ENCODE measurements at regions of chr1 and their contacts with region 1.

Region 1: DNA sequence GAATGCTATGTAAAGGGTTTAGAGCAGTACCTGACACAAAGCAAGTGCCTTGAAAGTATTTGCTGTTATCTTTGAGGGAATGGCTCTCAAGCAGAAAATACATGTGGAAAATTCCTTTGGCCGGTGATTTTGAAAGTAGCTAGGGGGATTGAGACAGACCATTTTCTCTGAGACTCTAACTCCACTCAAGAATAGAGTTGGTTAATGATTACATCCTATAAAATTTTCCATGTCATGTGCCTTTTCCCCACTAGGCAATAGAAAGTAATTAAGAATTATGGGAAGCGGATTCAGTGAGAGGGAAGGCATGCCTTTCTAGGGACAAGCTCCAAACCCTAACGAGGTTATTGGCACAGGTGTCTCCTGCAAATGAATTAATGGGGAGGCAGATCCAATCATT is 276.0 kb downstream of the GPATCH2 start:
- DNase-seq: no peak
- ATAC-seq: no peak
- H3K4me3 ChIP-seq: no peak overlapping the region
- H3K27ac ChIP-seq: no peak overlapping the region
- H3K4me1 ChIP-seq: no peaks in the 10 kb centered on the region
- H3K27me3 ChIP-seq: 0 out of 2 replicates have a peak, but pooled peaks cover 3% of the 10 kb centered on the region
- CTCF ChIP-seq: no peak
- POLR2A ChIP-seq: no peak
- RAD21 ChIP-seq: no peak

Region 2: GRCh38 chr1:217268058-217268457 is 86.8 kb before region 1 on chr1:
- CTCF ChIA-PET with region 1: no interaction called
- POLR2A ChIA-PET with region 1: no interaction called
- RAD21 ChIA-PET with region 1: no interaction called
- intact Hi-C with region 1: no loop called
- DNase-seq: no peak
- ATAC-seq: no peak
- H3K4me3 ChIP-seq: no peak overlapping the region
- H3K27ac ChIP-seq: no peak overlapping the region
- H3K4me1 ChIP-seq: no peaks in the 10 kb centered on the region
- H3K27me3 ChIP-seq: no peaks in the 10 kb centered on the region
- CTCF ChIP-seq: no peak
- POLR2A ChIP-seq: no peak
- RAD21 ChIP-seq: no peak

Region 3: GRCh38 chr1:217311766-217312165 is 43.1 kb before region 1 on chr1:
- CTCF ChIA-PET with region 1: no interaction called
- POLR2A ChIA-PET with region 1: no interaction called
- RAD21 ChIA-PET with region 1: no interaction called
- intact Hi-C with region 1: loop called (anchors 1 kb)
- DNase-seq: no peak
- ATAC-seq: peak; percentile 61; the same call in 1 of the 2 replicates
- H3K4me3 ChIP-seq: no peak overlapping the region
- H3K27ac ChIP-seq: no peak overlapping the region
- H3K4me1 ChIP-seq: no peaks in the 10 kb centered on the region
- H3K27me3 ChIP-seq: no peaks in the 10 kb centered on the region
- CTCF ChIP-seq: peak; percentile 3 to 27 (median 8); a peak in 2 of 6 replicates
- POLR2A ChIP-seq: no peak
- RAD21 ChIP-seq: peak; percentile 37; the same call in 1 of the 2 replicates